ENCODE measurements at regions of chr11 and their contacts with region 1.

Region 1: GRCh38 chr11:33987975-33988580 is 63.5 kb upstream of the CAPRIN1 start:
- DNase-seq: peak; percentile 42
- ATAC-seq: peak; percentile 95
- H3K4me3 ChIP-seq: no peak overlapping the region
- H3K27ac ChIP-seq: no peak overlapping the region
- H3K4me1 ChIP-seq: no peaks in the 10 kb centered on the region
- H3K27me3 ChIP-seq: no peaks in the 10 kb centered on the region
- CTCF ChIP-seq: peak; percentile 94

Region 2: DNA sequence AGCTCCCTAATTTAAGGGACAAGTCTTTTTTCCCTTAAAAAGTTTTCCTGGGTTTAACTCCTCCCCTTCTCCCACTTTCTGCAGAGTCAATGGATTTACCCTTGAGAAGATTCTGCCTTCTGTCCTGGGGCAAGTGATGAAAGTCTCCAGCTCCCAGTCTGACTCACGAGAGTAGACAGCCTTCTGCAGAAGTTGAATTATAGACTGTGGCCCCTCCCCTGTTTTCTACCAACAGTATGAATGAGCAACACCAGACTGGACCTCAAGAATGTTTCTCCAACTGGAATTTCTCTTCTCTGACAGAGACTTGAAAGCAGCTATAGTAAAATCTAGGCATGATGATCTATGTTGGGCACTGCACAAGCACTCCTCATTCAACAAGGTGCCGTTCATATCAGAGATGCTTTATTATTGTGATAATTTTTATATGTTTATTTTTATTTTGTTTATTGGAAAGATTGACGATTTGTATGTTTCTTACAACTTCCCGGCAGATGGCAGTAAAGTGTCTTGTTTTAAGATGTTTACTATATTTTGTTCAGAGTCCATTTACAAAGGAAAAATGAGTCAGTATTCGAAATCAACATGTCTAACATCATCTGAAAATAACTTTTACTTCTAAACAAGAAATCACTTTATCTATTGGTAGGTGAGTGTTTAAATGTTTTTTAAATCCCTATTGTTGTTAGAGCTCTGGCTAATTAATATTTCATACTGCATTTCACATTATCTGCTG is 152.8 kb before region 1 on chr11:
- CTCF ChIA-PET with region 1: interaction called, 13 read pairs
- POLR2A ChIA-PET with region 1: no interaction called
- in situ Hi-C with region 1: no loop called
- intact Hi-C with region 1: loop called (anchors 5 kb)
- DNase-seq: no peak
- ATAC-seq: no peak
- H3K4me3 ChIP-seq: no peak overlapping the region
- H3K27ac ChIP-seq: no peak overlapping the region
- H3K4me1 ChIP-seq: 0 out of 2 replicates have a peak, but pooled peaks cover 2% of the 10 kb centered on the region
- H3K27me3 ChIP-seq: peaks cover 10% of the 10 kb centered on the region; the same call in 1 of the 2 replicates
- CTCF ChIP-seq: peak; percentile 49

Measured in Panc1 (cell line).